CD8-positive, alpha-beta T cell (primary cell): ENCODE measurements at regions of chr17 and their contacts with region 1.

Region 1: DNA sequence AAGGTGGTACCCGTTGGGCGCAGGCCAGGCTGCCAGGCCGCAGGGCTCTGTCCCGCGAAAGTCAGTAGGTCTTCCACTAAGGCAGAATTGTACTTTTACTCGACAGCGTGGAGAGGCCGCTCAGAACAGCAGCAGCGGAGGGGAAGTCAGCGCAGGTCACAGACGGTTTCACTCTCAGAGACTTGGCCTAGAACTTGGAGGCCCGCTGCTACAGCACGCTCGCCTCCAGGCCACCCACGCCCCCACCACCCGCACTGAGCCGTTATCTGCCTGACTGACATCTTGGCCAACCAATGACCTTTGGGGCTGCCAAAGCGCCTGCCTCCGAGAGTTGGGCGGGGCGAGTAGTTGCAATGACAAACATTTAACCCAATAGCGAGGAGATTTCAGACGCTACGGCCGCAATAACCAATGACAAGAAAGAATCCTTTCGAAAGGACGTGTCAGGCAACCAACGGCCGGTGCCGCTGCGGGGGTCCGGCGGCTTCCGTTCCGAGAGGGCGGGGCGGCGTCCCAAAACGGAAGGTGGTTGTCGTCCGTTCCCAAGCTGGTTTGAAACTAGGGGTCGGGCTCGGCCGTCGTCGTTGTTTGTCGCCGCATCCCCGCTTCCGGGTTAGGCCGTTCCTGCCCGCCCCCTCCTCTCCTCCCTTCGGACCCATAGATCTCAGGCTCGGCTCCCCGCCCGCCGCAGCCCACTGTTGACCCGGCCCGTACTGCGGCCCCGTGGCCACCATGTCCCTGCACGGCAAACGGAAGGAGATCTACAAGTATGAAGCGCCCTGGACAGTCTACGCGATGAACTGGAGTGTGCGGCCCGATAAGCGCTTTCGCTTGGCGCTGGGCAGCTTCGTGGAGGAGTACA is at the start of gene DCAF7:
- DNase-seq: peak; percentile 99 to 100 (median 99)
- ATAC-seq: peak; percentile 94
- H3K4me3 ChIP-seq: peak within 1 kb of the TSS; percentile 99 to 100
- H3K4me3 Mint-ChIP-seq: peak within 1 kb of the TSS; percentile 98
- H3K27ac ChIP-seq: peak within 1 kb of the TSS; percentile 86 to 97
- H3K27ac Mint-ChIP-seq: peak within 1 kb of the TSS; percentile 98
- H3K4me1 ChIP-seq: peaks cover 39% of the 10 kb centered on the region
- H3K4me1 Mint-ChIP-seq: peaks cover 45% of the 10 kb centered on the region
- H3K27me3 ChIP-seq: no peaks in the 10 kb centered on the region
- H3K27me3 Mint-ChIP-seq: no peaks in the 10 kb centered on the region
- CTCF ChIP-seq: no peak
- total RNA-seq, gene DCAF7: 10.7 to 11.7 TPM

Region 2: GRCh38 chr17:63523253-63523855 is 26.8 kb before region 1 on chr17 and contains the start of gene KCNH6:
- CTCF ChIA-PET with region 1: no interaction called
- POLR2A ChIA-PET with region 1: no interaction called
- intact Hi-C with region 1: loop called in 1 of 2 experiments (anchors 1 kb)
- DNase-seq: no peak
- ATAC-seq: no peak
- H3K4me3 ChIP-seq: no peak within 1 kb of the TSS
- H3K4me3 Mint-ChIP-seq: no peak within 1 kb of the TSS
- H3K27ac ChIP-seq: no peak within 1 kb of the TSS
- H3K27ac Mint-ChIP-seq: no peak within 1 kb of the TSS
- H3K4me1 ChIP-seq: peaks cover 4% of the 10 kb centered on the region
- H3K4me1 Mint-ChIP-seq: peaks cover 5% of the 10 kb centered on the region
- H3K27me3 ChIP-seq: peaks cover 0 to 5% of the 10 kb centered on the region in 2 experiments
- H3K27me3 Mint-ChIP-seq: peaks cover 23% of the 10 kb centered on the region
- CTCF ChIP-seq: no peak
- total RNA-seq, gene KCNH6: not detected

Region 3: GRCh38 chr17:63564562-63564961 is 14.4 kb after region 1 on chr17:
- CTCF ChIA-PET with region 1: no interaction called
- POLR2A ChIA-PET with region 1: no interaction called
- intact Hi-C with region 1: no loop called
- DNase-seq: no peak
- ATAC-seq: no peak
- H3K4me3 ChIP-seq: no peak overlapping the region
- H3K4me3 Mint-ChIP-seq: no peak overlapping the region
- H3K27ac ChIP-seq: no peak overlapping the region
- H3K27ac Mint-ChIP-seq: no peak overlapping the region
- H3K4me1 ChIP-seq: peaks cover 11% of the 10 kb centered on the region
- H3K4me1 Mint-ChIP-seq: peaks cover 71% of the 10 kb centered on the region
- H3K27me3 ChIP-seq: no peaks in the 10 kb centered on the region
- H3K27me3 Mint-ChIP-seq: no peaks in the 10 kb centered on the region
- CTCF ChIP-seq: no peak

Region 4: DNA sequence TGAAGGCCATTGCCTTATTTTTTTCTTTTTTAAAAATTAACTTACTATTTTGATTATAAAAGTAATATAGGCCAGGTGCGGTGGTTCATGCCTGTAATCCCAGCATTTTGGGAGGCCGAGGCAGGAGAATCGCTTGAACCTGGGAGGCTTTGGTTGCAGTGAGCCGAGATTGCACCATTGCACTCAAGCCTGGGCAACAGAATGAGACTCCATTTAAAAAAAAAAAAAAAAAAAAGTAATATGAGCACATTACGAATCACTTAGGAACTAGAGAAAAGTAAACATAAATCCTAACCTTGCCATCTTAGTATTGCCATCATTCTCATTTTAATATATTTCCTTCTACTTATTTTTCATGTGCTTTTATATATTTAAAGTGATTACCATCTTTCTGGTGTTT is 37.6 kb after region 1 on chr17:
- CTCF ChIA-PET with region 1: no interaction called
- POLR2A ChIA-PET with region 1: no interaction called
- intact Hi-C with region 1: no loop called
- DNase-seq: no peak
- ATAC-seq: no peak
- H3K4me3 ChIP-seq: no peak overlapping the region
- H3K4me3 Mint-ChIP-seq: no peak overlapping the region
- H3K27ac ChIP-seq: no peak overlapping the region
- H3K27ac Mint-ChIP-seq: no peak overlapping the region
- H3K4me1 ChIP-seq: peaks cover 10% of the 10 kb centered on the region
- H3K4me1 Mint-ChIP-seq: peaks cover 16% of the 10 kb centered on the region
- H3K27me3 ChIP-seq: no peaks in the 10 kb centered on the region
- H3K27me3 Mint-ChIP-seq: no peaks in the 10 kb centered on the region
- CTCF ChIP-seq: no peak

Region 5: GRCh38 chr17:63611354-63611753 is 61.2 kb after region 1 on chr17:
- CTCF ChIA-PET with region 1: interaction called, 12 read pairs
- POLR2A ChIA-PET with region 1: interaction called, 5 read pairs
- intact Hi-C with region 1: no loop called
- DNase-seq: peak in 1 of 9 experiments; percentile 37
- ATAC-seq: peak; percentile 13
- H3K4me3 ChIP-seq: no peak overlapping the region
- H3K4me3 Mint-ChIP-seq: no peak overlapping the region
- H3K27ac ChIP-seq: peak overlapping the region in 1 of 2 experiments; percentile 39
- H3K27ac Mint-ChIP-seq: peak overlapping the region; percentile 91
- H3K4me1 ChIP-seq: peaks cover 28% of the 10 kb centered on the region
- H3K4me1 Mint-ChIP-seq: peaks cover 31% of the 10 kb centered on the region
- H3K27me3 ChIP-seq: no peaks in the 10 kb centered on the region
- H3K27me3 Mint-ChIP-seq: no peaks in the 10 kb centered on the region
- CTCF ChIP-seq: no peak

Region 6: GRCh38 chr17:63665527-63666214 is 115.5 kb after region 1 on chr17:
- CTCF ChIA-PET with region 1: no interaction called
- POLR2A ChIA-PET with region 1: no interaction called
- intact Hi-C with region 1: no loop called
- DNase-seq: no peak
- ATAC-seq: no peak
- H3K4me3 ChIP-seq: no peak overlapping the region
- H3K4me3 Mint-ChIP-seq: no peak overlapping the region
- H3K27ac ChIP-seq: no peak overlapping the region
- H3K27ac Mint-ChIP-seq: no peak overlapping the region
- H3K4me1 ChIP-seq: no peaks in the 10 kb centered on the region
- H3K4me1 Mint-ChIP-seq: peaks cover 13% of the 10 kb centered on the region
- H3K27me3 ChIP-seq: no peaks in the 10 kb centered on the region
- H3K27me3 Mint-ChIP-seq: no peaks in the 10 kb centered on the region
- CTCF ChIP-seq: no peak

Region 7: GRCh38 chr17:63827002-63827771 is 277.0 kb after region 1 on chr17 and contains the starts of genes FTSJ3 and PSMC5:
- CTCF ChIA-PET with region 1: no interaction called
- POLR2A ChIA-PET with region 1: no interaction called
- intact Hi-C with region 1: loop called in 1 of 2 experiments (anchors 2 kb)
- DNase-seq: peak; percentile 91 to 99 (median 95)
- ATAC-seq: peak; percentile 92
- H3K4me3 ChIP-seq: peak within 1 kb of the TSS; percentile 74 to 75
- H3K4me3 Mint-ChIP-seq: peak within 1 kb of the TSS; percentile 100
- H3K27ac ChIP-seq: peak within 1 kb of the TSS; percentile 66 to 96
- H3K27ac Mint-ChIP-seq: peak within 1 kb of the TSS; percentile 98
- H3K4me1 ChIP-seq: peaks cover 56% of the 10 kb centered on the region
- H3K4me1 Mint-ChIP-seq: peaks cover 81% of the 10 kb centered on the region
- H3K27me3 ChIP-seq: no peaks in the 10 kb centered on the region
- H3K27me3 Mint-ChIP-seq: no peaks in the 10 kb centered on the region
- CTCF ChIP-seq: peak; percentile 51
- total RNA-seq, gene FTSJ3: 60.0 to 70.3 TPM
- total RNA-seq, gene PSMC5: 88.5 to 90.3 TPM